ENCODE measurements at regions of chr12 and their contacts with region 1.

Region 1: GRCh38 chr12:10749700-10750384 is 26.7 kb upstream of the YBX3 start:
- DNase-seq: peak; percentile 85
- H3K4me3 Mint-ChIP-seq: peak overlapping the region; percentile 54
- H3K27ac Mint-ChIP-seq: no peak overlapping the region
- H3K4me1 Mint-ChIP-seq: peaks cover 10% of the 10 kb centered on the region
- H3K27me3 Mint-ChIP-seq: peaks cover 37% of the 10 kb centered on the region

Region 2: GRCh38 chr12:10235761-10236631 is 513.8 kb before region 1 on chr12:
- CTCF ChIA-PET with region 1: interaction called, 6 read pairs
- intact Hi-C with region 1: loop called (anchors 1 kb)
- DNase-seq: peak; percentile 43
- H3K4me3 Mint-ChIP-seq: no peak overlapping the region
- H3K27ac Mint-ChIP-seq: no peak overlapping the region
- H3K4me1 Mint-ChIP-seq: no peaks in the 10 kb centered on the region
- H3K27me3 Mint-ChIP-seq: no peaks in the 10 kb centered on the region

Region 3: DNA sequence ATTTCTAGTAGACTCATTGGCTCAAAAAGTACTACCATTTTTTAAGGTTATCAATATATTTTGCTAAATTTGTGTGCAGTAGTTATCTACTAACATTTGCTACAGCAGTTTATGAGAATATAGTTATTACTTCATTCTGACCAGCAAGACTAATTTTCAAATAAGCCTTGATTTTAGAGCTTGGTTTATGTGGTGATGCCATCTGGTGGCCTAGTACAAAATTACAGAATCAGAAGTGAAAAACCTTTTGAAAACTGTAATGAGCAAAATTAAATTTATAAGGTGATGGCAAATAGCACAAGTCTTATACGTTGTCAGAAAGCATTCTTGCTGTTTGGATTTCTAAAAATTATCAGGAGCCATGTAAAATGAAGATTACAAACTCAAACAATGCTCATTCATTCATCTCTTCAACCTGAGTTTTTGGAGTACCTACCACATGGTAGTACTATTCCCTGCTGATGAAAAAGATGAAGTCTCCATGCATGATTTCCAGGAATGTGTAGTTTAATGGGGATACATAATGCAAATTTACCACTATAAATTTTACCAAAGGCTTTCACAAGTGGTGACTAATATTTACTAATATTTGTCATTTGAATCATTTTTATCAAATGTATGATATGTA is 187.4 kb before region 1 on chr12:
- CTCF ChIA-PET with region 1: no interaction called
- intact Hi-C with region 1: loop called (anchors 1 kb)
- DNase-seq: peak; percentile 36
- H3K4me3 Mint-ChIP-seq: no peak overlapping the region
- H3K27ac Mint-ChIP-seq: no peak overlapping the region
- H3K4me1 Mint-ChIP-seq: peaks cover 5% of the 10 kb centered on the region
- H3K27me3 Mint-ChIP-seq: peaks cover 15% of the 10 kb centered on the region

Region 4: DNA sequence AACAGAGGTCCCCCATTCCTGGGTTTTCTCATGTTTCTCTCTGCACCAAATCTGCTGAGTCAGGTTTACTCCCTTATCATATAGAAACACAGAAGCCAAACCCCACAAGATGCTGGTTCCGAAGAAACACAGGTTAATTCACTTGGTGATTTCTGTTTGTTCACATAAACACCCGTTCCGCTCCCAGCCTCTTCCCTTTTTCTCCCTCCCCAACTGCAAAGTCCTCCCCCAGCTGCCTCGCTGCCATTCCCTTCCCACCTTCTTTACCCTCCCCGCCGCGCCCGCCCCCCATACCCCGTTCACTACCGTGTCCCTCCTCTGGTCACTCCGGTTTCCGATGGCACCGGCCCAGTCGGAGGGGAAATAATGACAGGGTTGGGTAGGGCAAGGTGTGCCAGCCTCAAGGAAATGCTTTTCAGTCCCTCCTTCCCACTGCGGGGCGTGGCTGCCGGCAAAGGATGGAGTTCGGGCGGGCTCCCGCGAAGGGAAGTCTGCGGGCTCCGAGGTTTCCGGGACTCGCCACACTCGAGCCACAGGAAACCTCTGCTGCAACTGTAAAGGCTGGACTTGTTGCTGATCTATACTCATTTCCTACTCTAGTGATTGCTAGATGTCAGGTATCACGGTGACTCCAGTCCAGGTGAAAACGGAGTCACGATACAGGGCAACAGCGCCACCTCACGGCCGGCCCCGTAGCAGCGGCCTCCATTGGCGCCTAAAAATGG is 76.0 kb before region 1 on chr12 and contains the start of gene STYK1:
- CTCF ChIA-PET with region 1: interaction called, 4 read pairs
- intact Hi-C with region 1: loop called (anchors 1 kb)
- DNase-seq: peak; percentile 86
- H3K4me3 Mint-ChIP-seq: peak within 1 kb of the TSS; percentile 68
- H3K27ac Mint-ChIP-seq: no peak within 1 kb of the TSS
- H3K4me1 Mint-ChIP-seq: peaks cover 20% of the 10 kb centered on the region
- H3K27me3 Mint-ChIP-seq: peaks cover 34% of the 10 kb centered on the region
- total RNA-seq, gene STYK1: not detected

Region 5: GRCh38 chr12:10721651-10722501 is 28.0 kb before region 1 on chr12:
- CTCF ChIA-PET with region 1: interaction called, 12 read pairs
- intact Hi-C with region 1: loop called (anchors 1 kb)
- DNase-seq: peak; percentile 77
- H3K4me3 Mint-ChIP-seq: peak overlapping the region; percentile 95
- H3K27ac Mint-ChIP-seq: peak overlapping the region; percentile 94
- H3K4me1 Mint-ChIP-seq: peaks cover 30% of the 10 kb centered on the region
- H3K27me3 Mint-ChIP-seq: peaks cover 31% of the 10 kb centered on the region

Region 6: DNA sequence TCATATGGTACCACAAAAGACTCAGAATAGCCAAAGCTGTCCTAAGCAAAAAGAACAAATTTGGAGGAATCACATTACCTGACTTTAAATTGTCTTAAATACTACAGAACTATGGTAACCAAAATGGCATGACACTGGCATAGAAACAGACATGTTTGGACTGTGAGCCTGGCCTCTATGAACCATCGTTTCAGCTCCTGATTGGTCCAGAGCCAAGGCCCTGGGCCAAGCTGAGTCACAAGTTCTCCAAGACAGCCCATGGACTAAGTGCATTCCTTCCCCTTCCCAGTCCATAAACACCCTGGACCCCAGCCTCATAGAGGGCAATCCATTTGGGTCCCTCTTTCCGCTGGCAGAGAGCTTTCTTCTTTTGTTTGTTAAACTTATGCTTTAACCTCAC is 111.5 kb after region 1 on chr12:
- CTCF ChIA-PET with region 1: no interaction called
- intact Hi-C with region 1: no loop called
- DNase-seq: no peak
- H3K4me3 Mint-ChIP-seq: no peak overlapping the region
- H3K27ac Mint-ChIP-seq: no peak overlapping the region
- H3K4me1 Mint-ChIP-seq: no peaks in the 10 kb centered on the region
- H3K27me3 Mint-ChIP-seq: no peaks in the 10 kb centered on the region

Region 7: DNA sequence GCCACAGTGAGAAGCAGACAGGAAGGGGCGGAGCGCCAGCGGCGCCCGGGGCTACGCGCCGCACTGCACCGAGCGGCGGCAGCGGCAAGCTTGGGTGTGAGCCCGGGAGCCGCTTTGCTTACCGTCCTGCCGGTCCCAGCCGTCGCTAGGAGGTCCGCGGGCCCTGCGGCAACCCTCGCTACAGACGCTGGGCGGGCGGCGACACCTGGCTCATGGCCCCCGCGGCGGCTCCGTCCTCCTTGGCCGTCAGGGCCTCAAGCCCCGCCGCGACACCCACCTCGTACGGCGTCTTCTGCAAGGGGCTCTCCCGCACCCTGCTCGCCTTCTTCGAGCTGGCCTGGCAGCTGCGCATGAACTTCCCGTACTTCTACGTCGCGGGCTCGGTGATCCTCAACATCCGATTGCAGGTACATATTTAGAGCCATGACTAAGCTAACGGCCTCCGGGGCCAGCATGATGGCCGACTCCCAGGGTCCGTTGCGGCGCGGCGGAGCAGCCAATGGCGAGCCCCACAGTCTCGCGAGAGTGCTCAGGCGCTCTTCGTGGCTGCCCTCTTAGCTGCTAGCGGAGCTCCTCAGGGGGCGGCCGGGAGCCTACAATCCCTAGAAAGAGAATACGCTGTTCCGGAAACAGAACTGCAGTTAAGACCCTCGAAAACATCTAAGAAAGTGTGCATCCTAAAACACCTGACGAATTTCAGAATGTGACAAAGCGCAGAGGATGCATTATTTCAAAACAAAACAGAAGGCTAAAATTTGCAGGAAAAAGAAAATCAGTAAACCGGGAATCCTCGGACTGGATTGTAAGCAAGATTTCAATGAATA is 421.5 kb after region 1 on chr12 and contains the start of gene SMIM10L1:
- CTCF ChIA-PET with region 1: interaction called, 4 read pairs
- intact Hi-C with region 1: loop called (anchors 10 kb)
- DNase-seq: peak; percentile 94
- H3K4me3 Mint-ChIP-seq: peak within 1 kb of the TSS; percentile 97
- H3K27ac Mint-ChIP-seq: peak within 1 kb of the TSS; percentile 99
- H3K4me1 Mint-ChIP-seq: peaks cover 38% of the 10 kb centered on the region
- H3K27me3 Mint-ChIP-seq: no peaks in the 10 kb centered on the region
- total RNA-seq, gene SMIM10L1: 5.0 to 5.6 TPM

Measured in activated naive CD4-positive, alpha-beta T cell treated with anti-CD3 and anti-CD28 coated beads for 36 hours (primary cell).